H1 (cell line): ENCODE measurements at regions of chr14 and their contacts with region 1.

Region 1: GRCh38 chr14:103333754-103334643 is at the start of gene EIF5:
- DNase-seq: peak; percentile 95 to 98
- H3K4me3 ChIP-seq: peak within 1 kb of the TSS; percentile 90 to 93 (median 92)
- H3K27ac ChIP-seq: peak within 1 kb of the TSS; percentile 98
- H3K4me1 ChIP-seq: peaks cover 0 to 8% (median 4%) of the 10 kb centered on the region in 4 experiments; a peak in 4 of 7 replicates
- H3K27me3 ChIP-seq: no peaks in the 10 kb centered on the region
- CTCF ChIP-seq: no peak
- EP300 ChIP-seq: no peak
- POLR2A ChIP-seq: peak; percentile 98 to 100
- RAD21 ChIP-seq: no peak; a peak in 1 of 4 replicates
- total RNA-seq, gene EIF5: 323 and 328 TPM in 2 replicates

Region 2: GRCh38 chr14:103225476-103225875 is 108.5 kb before region 1 on chr14:
- CTCF ChIA-PET with region 1: no interaction called
- POLR2A ChIA-PET with region 1: no interaction called
- DNase-seq: no peak
- H3K4me3 ChIP-seq: no peak overlapping the region
- H3K27ac ChIP-seq: no peak overlapping the region
- H3K4me1 ChIP-seq: peaks cover 0 to 7% (median 0%) of the 10 kb centered on the region in 4 experiments; a peak in 2 of 7 replicates
- H3K27me3 ChIP-seq: peaks cover 3 to 15% (median 11%) of the 10 kb centered on the region in 4 experiments
- CTCF ChIP-seq: no peak
- EP300 ChIP-seq: no peak
- POLR2A ChIP-seq: no peak
- RAD21 ChIP-seq: no peak

Region 3: DNA sequence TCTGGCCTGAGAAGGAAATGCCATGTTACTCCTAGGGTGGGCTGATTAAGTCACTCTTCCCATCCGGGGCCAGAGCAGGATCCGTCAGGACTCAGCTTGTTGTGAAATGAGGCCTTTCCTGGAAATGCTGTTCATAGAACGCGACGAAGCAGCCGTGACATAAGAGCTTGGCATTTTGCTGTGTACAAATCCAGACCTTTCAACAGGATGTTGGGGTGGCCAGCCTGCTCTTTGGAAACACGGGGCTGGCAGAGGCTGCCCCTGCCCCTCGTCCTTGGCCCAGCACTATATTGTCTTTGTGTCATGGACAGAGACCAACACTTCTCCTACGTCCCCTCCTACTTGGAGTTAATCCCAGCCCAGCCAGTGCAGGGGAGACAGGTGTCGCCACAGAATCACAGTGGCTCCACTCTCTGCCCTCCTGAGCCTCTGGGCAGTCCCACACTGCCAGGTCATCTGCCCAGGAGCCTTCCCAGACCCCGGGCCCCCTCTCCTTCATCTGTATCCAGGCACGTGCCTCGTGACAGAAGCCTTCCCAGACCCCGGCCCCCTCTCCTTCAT is 18.6 kb before region 1 on chr14:
- CTCF ChIA-PET with region 1: interaction called, 3 read pairs
- POLR2A ChIA-PET with region 1: interaction called, 229 read pairs
- DNase-seq: no peak
- H3K4me3 ChIP-seq: no peak overlapping the region
- H3K27ac ChIP-seq: no peak overlapping the region
- H3K4me1 ChIP-seq: peaks cover 4 to 17% (median 9%) of the 10 kb centered on the region in 4 experiments
- H3K27me3 ChIP-seq: no peaks in the 10 kb centered on the region
- CTCF ChIP-seq: no peak
- EP300 ChIP-seq: no peak
- POLR2A ChIP-seq: no peak
- RAD21 ChIP-seq: no peak

Region 4: DNA sequence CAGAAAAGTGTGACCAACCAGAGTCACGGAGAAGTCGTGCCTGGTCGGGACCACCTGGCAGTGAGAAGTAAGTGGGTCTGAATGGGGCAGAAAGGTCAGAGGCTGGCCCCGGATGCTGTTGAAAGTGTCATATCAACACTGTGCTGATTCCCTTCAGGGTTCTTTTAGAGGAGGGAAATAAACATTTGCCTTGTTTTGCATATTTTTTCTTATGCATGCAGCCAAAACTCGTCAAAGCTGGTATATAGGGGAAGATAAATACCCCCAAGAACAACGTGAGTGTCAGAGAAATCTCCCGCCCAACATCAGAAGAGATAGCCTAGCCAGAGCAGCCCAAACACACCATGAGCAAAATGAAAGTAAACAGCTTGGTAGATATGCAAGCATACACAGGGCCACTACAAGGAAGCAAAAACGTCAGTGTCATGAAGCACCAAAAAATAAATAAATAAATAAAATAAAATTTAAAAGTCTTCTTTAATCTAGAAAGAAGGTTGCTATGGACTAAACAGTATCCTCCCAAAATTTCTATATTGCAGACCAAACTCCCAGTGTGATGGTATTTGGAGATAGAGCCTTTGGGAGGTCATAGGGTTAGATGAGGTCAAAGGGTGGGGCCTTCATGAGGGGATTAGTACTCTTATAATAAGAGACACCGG is 22.2 kb after region 1 on chr14:
- CTCF ChIA-PET with region 1: interaction called, 3 read pairs
- POLR2A ChIA-PET with region 1: interaction called, 132 read pairs
- DNase-seq: no peak
- H3K4me3 ChIP-seq: no peak overlapping the region
- H3K27ac ChIP-seq: no peak overlapping the region
- H3K4me1 ChIP-seq: peaks cover 3 to 13% (median 3%) of the 10 kb centered on the region in 4 experiments; a peak in 6 of 7 replicates
- H3K27me3 ChIP-seq: no peaks in the 10 kb centered on the region
- CTCF ChIP-seq: no peak
- EP300 ChIP-seq: no peak
- POLR2A ChIP-seq: no peak
- RAD21 ChIP-seq: no peak

Region 5: DNA sequence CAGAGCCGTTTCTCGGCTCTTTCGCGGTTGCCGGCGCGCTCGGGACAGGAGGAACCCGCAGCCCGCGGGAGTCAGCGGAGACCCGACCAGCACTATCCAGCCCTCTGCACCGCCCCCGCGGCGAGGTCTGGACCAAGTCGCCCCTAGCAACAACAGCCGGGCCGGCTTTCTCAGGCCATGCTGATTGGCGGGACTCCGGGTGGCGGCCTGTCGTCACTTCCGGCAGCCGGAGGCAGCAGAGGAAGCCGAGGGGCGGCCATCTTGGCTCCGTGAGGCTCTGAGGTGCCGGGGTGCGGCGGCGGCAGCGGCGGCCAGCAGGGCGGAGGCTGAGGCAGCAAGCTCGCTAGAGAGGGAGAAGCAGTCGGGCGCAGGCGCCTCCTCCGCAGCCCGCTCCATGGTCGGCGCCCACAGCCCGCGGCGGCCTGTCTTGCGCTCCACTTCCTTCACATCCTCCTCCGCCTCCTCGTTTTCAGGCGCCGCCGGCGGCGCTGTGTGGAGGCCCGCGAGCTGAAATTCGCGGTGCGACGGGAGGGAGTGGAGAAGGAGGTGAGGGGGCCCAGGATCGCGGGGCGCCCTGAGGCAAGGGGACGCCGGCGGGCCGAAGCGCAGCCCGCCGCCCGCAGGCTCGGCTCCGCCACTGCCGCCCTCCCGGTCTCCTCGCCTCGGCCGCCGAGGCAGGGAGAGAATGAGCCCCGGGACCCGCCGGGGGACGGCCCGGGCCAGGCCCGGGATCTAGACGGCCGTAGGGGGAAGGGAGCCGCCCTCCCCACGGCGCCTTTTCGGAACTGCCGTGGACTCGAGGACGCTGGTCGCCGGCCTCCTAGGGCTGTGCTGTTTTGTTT is 51.4 kb after region 1 on chr14 and contains the start of gene MARK3:
- CTCF ChIA-PET with region 1: interaction called, 6 read pairs
- POLR2A ChIA-PET with region 1: interaction called, 18 read pairs
- DNase-seq: peak; percentile 83 to 96
- H3K4me3 ChIP-seq: peak within 1 kb of the TSS; percentile 82 to 91 (median 88)
- H3K27ac ChIP-seq: peak within 1 kb of the TSS; percentile 92
- H3K4me1 ChIP-seq: peaks cover 0 to 8% (median 4%) of the 10 kb centered on the region in 4 experiments; a peak in 5 of 7 replicates
- H3K27me3 ChIP-seq: peaks cover 0 to 10% (median 5%) of the 10 kb centered on the region in 4 experiments; a peak in 3 of 7 replicates
- CTCF ChIP-seq: peak in 1 of 3 experiments; percentile 15; a peak in 1 of 4 replicates
- EP300 ChIP-seq: no peak
- POLR2A ChIP-seq: peak; percentile 42 to 82
- RAD21 ChIP-seq: no peak
- total RNA-seq, gene MARK3: 76.6 and 76.9 TPM in 2 replicates